GM10248 (cell line): ENCODE measurements at regions of chr12 and their contacts with region 1.

Region 1: DNA sequence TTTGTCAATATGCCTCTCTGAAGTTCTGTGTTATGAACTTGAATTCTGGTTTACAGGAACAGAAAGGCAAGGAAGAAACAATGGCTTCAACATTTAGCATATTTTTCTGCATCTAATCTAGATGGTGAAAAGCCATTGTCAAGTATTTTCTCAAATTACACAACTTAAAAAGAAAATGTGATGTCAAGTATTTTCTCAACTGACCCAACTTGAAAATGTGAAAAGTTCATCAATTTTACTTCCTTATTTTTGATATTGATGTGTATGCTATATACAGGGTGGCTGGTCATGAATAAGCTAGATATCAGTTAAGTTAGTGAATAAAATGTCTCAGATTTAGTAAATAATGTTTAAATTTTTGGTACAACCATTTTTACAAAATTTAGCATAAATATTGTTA is 196.7 kb downstream of the ALX1 start:
- DNase-seq: no peak
- CTCF ChIP-seq: no peak

Region 2: GRCh38 chr12:85872497-85873091 is 395.8 kb after region 1 on chr12:
- CTCF ChIA-PET with region 1: interaction called, 30 read pairs
- POLR2A ChIA-PET with region 1: no interaction called
- DNase-seq: peak; percentile 33
- CTCF ChIP-seq: peak; percentile 76